ENCODE measurements at regions of chr6 and their contacts with region 1.

Region 1: DNA sequence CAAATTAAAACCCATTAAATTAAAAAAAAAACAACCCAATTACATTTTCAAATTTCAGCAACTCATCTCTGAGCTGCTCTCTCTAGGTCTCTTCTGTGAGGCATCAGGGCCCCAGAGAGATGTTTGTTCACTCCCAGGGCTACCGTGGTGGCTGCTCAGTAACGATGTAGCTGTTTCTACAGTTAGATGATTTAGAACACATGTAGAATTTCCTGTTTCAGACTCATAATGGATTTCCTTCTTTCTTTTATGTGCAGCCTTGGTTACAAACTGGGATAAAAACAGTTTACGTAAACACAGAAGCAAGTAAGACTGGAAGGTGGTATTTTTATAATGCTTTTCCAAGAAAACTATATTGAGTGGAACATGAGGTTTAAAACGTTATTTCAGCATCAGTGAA is 116.1 kb upstream of the CCN2 start:
- DNase-seq: no peak
- ATAC-seq: no peak

Region 2: GRCh38 chr6:132126150-132126549 is 58.9 kb after region 1 on chr6:
- intact Hi-C with region 1: loop called (anchors 5 kb)
- DNase-seq: no peak
- ATAC-seq: no peak